Activated CD4-positive, alpha-beta T cell treated with anti-CD3 and anti-CD28 coated beads, Interleukin-2, amount 10 ng/mL, durations not matched to agents 24 days and 14 days (primary cell): ENCODE measurements at regions of chr9 and their contacts with region 1.

Region 1: DNA sequence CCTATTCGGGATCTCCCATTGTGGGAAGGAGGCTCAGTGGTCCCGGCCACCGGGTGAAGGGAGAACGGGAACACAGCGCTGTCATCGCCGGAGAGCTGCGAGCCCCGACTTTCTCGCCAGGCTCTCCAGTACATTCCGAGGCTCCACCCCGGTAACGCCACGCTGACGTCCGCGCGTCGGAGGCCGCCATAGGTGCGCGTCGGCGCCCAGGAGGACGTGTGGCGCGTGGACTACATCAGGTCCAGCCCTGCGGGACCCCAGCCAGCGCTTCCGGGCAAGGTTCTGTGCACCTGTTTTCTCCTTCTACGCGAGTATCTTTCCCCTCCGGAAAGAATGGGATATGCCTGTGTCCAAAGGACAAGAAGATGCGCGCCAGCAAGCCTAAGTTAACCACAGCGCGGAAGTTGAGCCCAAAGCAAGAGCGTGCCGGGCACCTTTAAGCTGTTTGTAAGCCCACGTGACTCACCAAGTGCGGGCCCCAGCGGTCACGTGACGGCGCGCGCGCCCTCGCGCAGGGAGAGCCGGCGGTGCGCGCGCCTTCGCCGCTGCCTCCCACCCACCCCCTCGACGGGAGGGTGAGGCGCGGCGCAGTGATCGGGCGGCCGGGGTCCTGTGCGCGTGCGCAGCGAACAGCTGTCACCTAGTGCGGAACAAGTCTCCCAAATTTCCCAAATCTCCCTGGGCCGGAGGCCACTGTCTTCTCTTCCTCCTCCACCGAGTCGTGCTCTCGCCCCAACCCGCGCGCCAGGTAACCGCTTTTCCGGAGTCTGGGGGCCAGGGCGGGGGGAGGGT is at the start of gene KDM4C:
- DNase-seq: peak; percentile 98
- H3K4me3 Mint-ChIP-seq: peak within 1 kb of the TSS; percentile 97
- H3K27ac Mint-ChIP-seq: peak within 1 kb of the TSS; percentile 99
- H3K4me1 Mint-ChIP-seq: peaks cover 23% of the 10 kb centered on the region
- H3K27me3 Mint-ChIP-seq: no peaks in the 10 kb centered on the region
- total RNA-seq, gene KDM4C: 36.4 and 39.8 TPM in 2 replicates

Region 2: GRCh38 chr9:5843794-5844504 is 913.7 kb before region 1 on chr9:
- intact Hi-C with region 1: loop called (anchors 10 kb)
- DNase-seq: peak; percentile 63
- H3K4me3 Mint-ChIP-seq: peak overlapping the region; percentile 73
- H3K27ac Mint-ChIP-seq: peak overlapping the region; percentile 91
- H3K4me1 Mint-ChIP-seq: peaks cover 68% of the 10 kb centered on the region
- H3K27me3 Mint-ChIP-seq: no peaks in the 10 kb centered on the region

Region 3: DNA sequence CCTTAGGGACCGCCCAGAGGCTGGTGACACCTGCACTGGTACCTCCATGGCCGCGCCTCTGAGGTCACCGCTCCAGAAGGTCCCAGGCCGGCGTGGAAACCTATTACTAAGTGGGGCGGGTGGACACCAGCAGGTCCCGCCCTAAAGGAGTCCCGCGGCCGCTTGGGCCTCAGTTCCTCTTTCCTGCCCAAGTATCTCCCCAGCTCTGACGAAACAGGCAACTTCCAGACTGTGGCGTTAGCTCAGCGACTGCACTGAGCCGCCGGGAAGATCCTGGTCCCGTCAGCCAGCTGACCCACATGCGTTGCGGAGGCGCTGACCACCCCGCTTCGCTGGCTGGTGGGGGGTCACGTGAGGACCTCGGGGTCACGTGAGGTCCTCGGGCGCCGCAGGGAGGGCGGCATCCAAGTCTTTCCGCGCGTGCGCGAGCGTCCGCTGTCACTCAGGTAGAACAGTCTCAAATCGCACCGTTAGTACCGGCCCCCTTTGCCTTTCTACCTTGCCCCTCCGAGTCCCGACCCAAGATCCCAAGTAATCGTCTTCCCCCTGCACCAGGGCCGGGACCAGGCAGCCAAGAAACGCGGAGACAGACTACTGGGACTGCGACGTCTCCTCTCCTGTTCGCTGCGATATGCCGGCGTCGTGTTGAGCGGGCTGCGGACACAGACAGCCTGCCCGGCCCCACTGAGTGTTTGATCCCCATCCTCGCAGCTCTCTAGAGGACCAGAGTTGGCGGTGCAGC is 53.6 kb before region 1 on chr9:
- intact Hi-C with region 1: loop called (anchors 1 kb)
- DNase-seq: peak; percentile 96
- H3K4me3 Mint-ChIP-seq: peak overlapping the region; percentile 87
- H3K27ac Mint-ChIP-seq: peak overlapping the region; percentile 87
- H3K4me1 Mint-ChIP-seq: peaks cover 16% of the 10 kb centered on the region
- H3K27me3 Mint-ChIP-seq: peaks cover 2% of the 10 kb centered on the region

Region 4: DNA sequence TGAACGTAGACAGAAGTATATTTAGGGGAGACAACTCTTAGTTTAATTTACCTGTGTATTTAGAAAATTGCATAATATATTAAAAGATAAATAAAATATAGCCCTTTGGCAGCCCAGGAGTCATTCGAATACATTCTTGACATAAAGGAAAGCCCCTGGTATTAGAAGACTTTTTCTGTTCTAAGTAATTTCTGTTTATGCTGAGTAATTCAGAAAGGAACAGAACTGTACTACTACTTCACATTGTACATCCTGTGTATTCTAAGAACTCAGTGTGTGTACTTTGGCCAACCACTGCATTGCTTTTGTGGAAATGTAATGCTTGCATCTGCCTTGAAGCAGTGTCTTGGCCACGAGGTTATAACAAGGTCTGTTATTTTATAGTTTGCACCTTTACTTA is 136.5 kb after region 1 on chr9:
- intact Hi-C with region 1: loop called (anchors 5 kb)
- DNase-seq: peak; percentile 76
- H3K4me3 Mint-ChIP-seq: peak overlapping the region; percentile 57
- H3K27ac Mint-ChIP-seq: peak overlapping the region; percentile 69
- H3K4me1 Mint-ChIP-seq: peaks cover 29% of the 10 kb centered on the region
- H3K27me3 Mint-ChIP-seq: no peaks in the 10 kb centered on the region

Region 5: GRCh38 chr9:7081065-7081600 is 323.5 kb after region 1 on chr9:
- intact Hi-C with region 1: no loop called
- DNase-seq: no peak
- H3K4me3 Mint-ChIP-seq: no peak overlapping the region
- H3K27ac Mint-ChIP-seq: no peak overlapping the region
- H3K4me1 Mint-ChIP-seq: no peaks in the 10 kb centered on the region
- H3K27me3 Mint-ChIP-seq: no peaks in the 10 kb centered on the region